HEK293 (cell line): ENCODE measurements at regions of chr10 and their contacts with region 1.

Region 1: GRCh38 chr10:28250782-28251181 is 52.1 kb downstream of the MPP7 start:
- H3K4me3 ChIP-seq: no peak overlapping the region
- H3K27ac ChIP-seq: no peak overlapping the region
- H3K4me1 ChIP-seq: peaks cover 9% of the 10 kb centered on the region
- CTCF ChIP-seq: no peak

Region 2: GRCh38 chr10:28089467-28089866 is 161.3 kb before region 1 on chr10:
- CTCF ChIA-PET with region 1: no interaction called
- POLR2A ChIA-PET with region 1: no interaction called
- H3K4me3 ChIP-seq: no peak overlapping the region
- H3K27ac ChIP-seq: no peak overlapping the region
- H3K4me1 ChIP-seq: no peaks in the 10 kb centered on the region
- CTCF ChIP-seq: no peak

Region 3: DNA sequence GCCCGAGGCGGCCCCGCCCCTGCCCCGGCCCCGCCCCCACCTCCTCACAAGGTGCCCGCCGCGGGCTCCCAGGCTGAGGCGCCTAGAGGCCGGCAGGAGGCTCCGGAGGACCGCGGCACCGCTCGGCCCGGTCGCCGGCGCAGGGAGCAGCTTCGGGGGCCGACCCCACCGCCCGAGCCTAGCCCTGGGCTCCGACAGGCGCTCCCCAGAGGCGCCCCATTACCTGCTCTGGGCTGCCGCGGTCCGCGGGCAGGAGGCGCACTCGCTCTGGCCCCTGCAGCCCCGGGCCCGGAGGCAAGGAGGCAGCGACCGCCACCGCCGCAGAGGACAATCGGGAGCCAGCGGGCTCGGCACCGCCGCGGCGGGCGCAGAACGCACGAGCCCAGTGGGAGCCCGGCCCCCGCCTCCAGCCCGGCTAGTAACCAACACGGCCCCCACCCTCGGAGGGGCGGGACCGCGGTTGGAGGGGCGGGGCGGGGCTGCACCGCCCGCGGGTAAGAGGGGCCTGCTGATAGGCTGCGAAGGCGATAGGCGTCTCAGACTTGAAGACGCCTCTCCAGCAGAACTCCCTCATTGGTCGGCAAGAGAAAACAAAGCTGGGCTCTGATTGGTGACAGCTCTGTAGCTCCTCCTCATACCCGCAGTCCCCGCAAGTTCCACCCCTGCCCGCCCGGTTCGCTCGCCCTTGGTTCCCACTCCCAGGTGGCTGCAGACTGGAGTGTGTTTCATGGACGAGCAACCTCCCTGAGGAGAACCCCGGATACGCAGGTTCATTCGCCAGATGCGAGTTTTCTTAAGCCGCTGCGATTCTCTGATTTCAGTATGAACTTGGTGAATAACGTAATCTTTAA is 52.1 kb after region 1 on chr10 and contains the start of gene MPP7:
- CTCF ChIA-PET with region 1: interaction called, 43 read pairs
- POLR2A ChIA-PET with region 1: interaction called, 4 read pairs
- H3K4me3 ChIP-seq: peak within 1 kb of the TSS; percentile 81
- H3K27ac ChIP-seq: peak within 1 kb of the TSS; percentile 90
- H3K4me1 ChIP-seq: peaks cover 6% of the 10 kb centered on the region; the same call in 1 of the 2 replicates
- CTCF ChIP-seq: no peak; the same call in 1 of the 2 replicates

Region 4: DNA sequence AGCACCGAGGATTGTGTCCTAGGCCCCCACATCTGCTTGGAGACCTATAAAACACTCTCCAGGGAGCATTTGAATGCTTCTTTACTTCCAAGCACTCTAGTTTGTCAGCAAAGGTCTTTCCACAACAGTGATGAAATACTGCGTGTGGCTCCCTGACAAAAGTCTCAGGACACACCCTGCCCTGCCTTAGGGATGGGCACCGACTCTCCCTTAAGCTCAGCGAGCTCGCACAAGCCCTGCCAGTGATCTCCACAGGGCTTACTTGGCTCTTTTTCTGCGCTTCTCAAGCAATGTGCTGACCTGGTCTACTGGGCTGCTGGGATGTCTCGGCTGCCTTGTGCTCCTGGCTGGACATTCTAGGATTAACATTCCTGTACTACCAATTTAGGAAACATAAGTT is 136.4 kb after region 1 on chr10:
- CTCF ChIA-PET with region 1: interaction called, 101 read pairs
- POLR2A ChIA-PET with region 1: no interaction called
- H3K4me3 ChIP-seq: no peak overlapping the region
- H3K27ac ChIP-seq: no peak overlapping the region
- H3K4me1 ChIP-seq: peaks cover 6% of the 10 kb centered on the region; the same call in 1 of the 2 replicates
- CTCF ChIP-seq: no peak

Region 5: DNA sequence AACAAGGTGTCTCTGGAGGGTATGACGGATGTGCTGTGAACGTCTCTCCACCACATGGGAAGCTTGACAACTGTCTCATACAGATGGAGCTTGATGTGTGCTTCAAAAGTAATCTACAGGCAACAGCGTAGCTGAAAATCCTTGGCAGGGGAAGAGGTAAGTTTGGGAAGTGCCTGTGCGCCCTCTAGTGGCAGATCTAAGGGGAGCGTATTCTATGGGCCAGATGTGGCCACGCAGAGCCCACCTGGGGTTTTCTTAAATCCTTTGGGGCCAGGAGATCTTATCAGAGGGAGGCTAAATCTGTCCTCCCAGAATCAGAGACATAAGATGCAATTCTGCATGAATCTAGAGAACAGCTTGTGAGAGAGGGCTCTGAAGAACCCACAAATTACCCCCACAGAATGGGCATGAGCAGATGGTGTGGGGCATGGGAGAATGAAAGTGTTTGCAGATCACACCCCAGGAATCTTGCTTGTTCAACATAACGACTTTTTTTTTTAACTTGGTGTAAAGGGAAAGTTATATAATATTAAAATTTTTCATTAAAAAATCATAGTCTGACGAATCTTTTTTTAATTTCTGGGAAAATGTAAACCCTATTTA is 143.3 kb after region 1 on chr10:
- CTCF ChIA-PET with region 1: interaction called, 45 read pairs
- POLR2A ChIA-PET with region 1: no interaction called
- H3K4me3 ChIP-seq: no peak overlapping the region
- H3K27ac ChIP-seq: no peak overlapping the region
- H3K4me1 ChIP-seq: no peaks in the 10 kb centered on the region
- CTCF ChIP-seq: peak; percentile 55; the same call in 1 of the 2 replicates

Region 6: DNA sequence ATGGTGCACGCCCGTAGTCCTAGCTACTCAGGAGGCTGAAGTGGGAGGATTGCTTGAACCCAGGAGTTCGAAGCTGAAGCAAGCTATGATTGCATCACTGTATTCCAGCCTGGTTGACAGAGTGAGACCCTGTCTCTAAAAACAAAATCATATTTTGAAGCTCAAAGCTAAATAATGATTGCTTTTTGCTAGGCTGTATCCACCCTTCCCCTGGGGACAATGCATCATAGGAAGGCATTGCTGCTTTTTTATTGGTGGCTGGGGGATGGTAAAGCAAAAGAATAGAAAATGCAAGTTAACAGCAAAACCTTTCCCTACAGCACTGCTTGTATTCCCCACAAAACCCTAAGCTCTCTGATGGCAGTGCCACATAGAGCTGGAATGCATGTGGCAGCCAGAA is 174.6 kb after region 1 on chr10:
- CTCF ChIA-PET with region 1: no interaction called
- POLR2A ChIA-PET with region 1: no interaction called
- H3K4me3 ChIP-seq: no peak overlapping the region
- H3K27ac ChIP-seq: no peak overlapping the region
- H3K4me1 ChIP-seq: no peaks in the 10 kb centered on the region
- CTCF ChIP-seq: no peak

Region 7: GRCh38 chr10:28503114-28503513 is 252.3 kb after region 1 on chr10:
- CTCF ChIA-PET with region 1: no interaction called
- POLR2A ChIA-PET with region 1: no interaction called
- H3K4me3 ChIP-seq: no peak overlapping the region
- H3K27ac ChIP-seq: no peak overlapping the region
- H3K4me1 ChIP-seq: peaks cover 9% of the 10 kb centered on the region
- CTCF ChIP-seq: no peak